ENCODE measurements at regions of chr2 and their contacts with region 1.

Region 1: GRCh38 chr2:231557571-231558237 is 27.5 kb upstream of the NMUR1 start:
- DNase-seq: peak; percentile 48 to 72 (median 64)
- H3K4me3 ChIP-seq: no peak overlapping the region
- H3K27ac ChIP-seq: peak overlapping the region in 1 of 2 donors; percentile 22
- H3K4me1 ChIP-seq: peaks cover 18% of the 10 kb centered on the region
- H3K27me3 ChIP-seq: no peaks in the 10 kb centered on the region
- CTCF ChIP-seq: peak in 2 of 3 donors; percentile 28 to 30
- EP300 ChIP-seq: no peak
- POLR2A ChIP-seq: no peak

Region 2: DNA sequence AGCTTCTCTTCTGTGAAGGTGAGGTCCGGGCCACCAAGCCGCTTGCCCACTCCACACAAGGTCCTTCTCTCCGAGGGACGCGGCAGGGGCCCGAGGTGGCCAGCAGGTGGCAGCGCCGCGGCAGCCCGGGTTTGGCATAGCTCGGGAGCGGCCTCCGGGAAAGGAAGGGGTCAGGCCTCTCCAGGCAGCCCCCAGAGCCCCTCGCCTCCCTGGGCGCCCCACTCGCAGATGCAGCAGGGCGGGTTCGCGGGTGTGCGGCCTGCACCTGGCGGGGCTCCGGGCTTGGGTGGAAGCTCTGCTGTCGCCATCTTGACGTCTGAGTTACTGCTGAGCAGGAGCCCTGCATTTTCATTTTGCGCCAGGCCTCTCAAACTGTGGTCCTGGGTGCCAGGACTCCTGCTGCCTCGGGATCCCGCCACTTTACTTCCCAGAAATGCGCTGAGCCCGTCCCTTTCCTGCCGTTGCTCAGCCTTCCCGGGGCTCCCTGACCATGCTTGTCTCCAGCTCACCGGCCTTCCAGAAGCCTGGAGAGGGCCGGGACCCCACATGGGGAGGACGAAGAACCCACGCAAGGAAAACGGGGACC is 74.8 kb before region 1 on chr2:
- intact Hi-C with region 1: loop called in 3 of 4 experiments (anchors 2 to 10 kb)
- DNase-seq: peak; percentile 71 to 83 (median 80)
- H3K4me3 ChIP-seq: peak overlapping the region; percentile 42
- H3K27ac ChIP-seq: peak overlapping the region; percentile 67 to 73
- H3K4me1 ChIP-seq: peaks cover 1% of the 10 kb centered on the region
- H3K27me3 ChIP-seq: no peaks in the 10 kb centered on the region
- CTCF ChIP-seq: peak; percentile 76 to 89 (median 79)
- EP300 ChIP-seq: no peak
- POLR2A ChIP-seq: no peak

Region 3: DNA sequence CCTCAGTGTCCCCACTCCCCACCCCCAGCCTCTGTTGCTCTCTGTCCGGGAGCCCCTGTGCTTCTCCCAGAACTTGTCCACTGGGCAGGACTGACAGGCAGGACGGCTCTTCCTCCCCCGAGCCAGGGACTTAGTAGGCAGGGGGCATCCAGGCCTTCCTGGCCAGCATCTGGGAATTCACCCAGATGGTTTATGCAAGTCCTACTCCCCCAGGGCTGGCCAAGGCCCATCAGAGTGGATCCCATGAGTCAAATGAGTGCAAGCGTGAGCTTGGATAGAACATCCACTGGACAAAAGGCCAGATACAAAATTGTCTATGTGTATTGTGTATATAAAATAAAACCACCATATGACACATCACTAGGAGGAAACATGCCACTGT is 34.9 kb before region 1 on chr2:
- intact Hi-C with region 1: loop called in 1 of 4 experiments (anchors 5 kb)
- DNase-seq: peak in 1 of 5 donors; percentile 36
- H3K4me3 ChIP-seq: no peak overlapping the region
- H3K27ac ChIP-seq: no peak overlapping the region
- H3K4me1 ChIP-seq: peaks cover 3% of the 10 kb centered on the region
- H3K27me3 ChIP-seq: no peaks in the 10 kb centered on the region
- CTCF ChIP-seq: no peak
- EP300 ChIP-seq: no peak
- POLR2A ChIP-seq: no peak

Measured in ovary (tissue), 10 donors.